GM12878 (cell line): ENCODE measurements at regions of chr22 and their contacts with region 1.

Region 1: GRCh38 chr22:38051900-38052862 is 5.0 kb upstream of the PICK1 start:
- DNase-seq: peak; percentile 30
- ATAC-seq: peak; percentile 93
- H3K4me3 ChIP-seq: no peak overlapping the region
- H3K27ac ChIP-seq: no peak overlapping the region
- H3K4me1 ChIP-seq: no peaks in the 10 kb centered on the region; the same call in 1 of the 2 replicates
- H3K27me3 ChIP-seq: no peaks in the 10 kb centered on the region; a peak in 2 of 4 replicates
- CTCF ChIP-seq: peak; percentile 87 to 97 (median 94); a peak in 5 of 6 replicates
- EP300 ChIP-seq: no peak
- POLR2A ChIP-seq: no peak
- RAD21 ChIP-seq: peak; percentile 89

Region 2: GRCh38 chr22:37959231-37959825 is 92.9 kb before region 1 on chr22:
- CTCF ChIA-PET with region 1: no interaction called
- POLR2A ChIA-PET with region 1: no interaction called
- RAD21 ChIA-PET with region 1: no interaction called
- SMC1A ChIA-PET with region 1: no interaction called
- in situ Hi-C with region 1: no loop called
- intact Hi-C with region 1: no loop called
- DNase-seq: no peak
- ATAC-seq: no peak
- H3K4me3 ChIP-seq: no peak overlapping the region
- H3K27ac ChIP-seq: no peak overlapping the region
- H3K4me1 ChIP-seq: no peaks in the 10 kb centered on the region
- H3K27me3 ChIP-seq: no peaks in the 10 kb centered on the region
- CTCF ChIP-seq: no peak
- EP300 ChIP-seq: no peak
- POLR2A ChIP-seq: no peak
- RAD21 ChIP-seq: no peak

Region 3: GRCh38 chr22:38034274-38034882 is 17.8 kb before region 1 on chr22:
- CTCF ChIA-PET with region 1: interaction called, 10 read pairs
- POLR2A ChIA-PET with region 1: no interaction called
- RAD21 ChIA-PET with region 1: interaction called, 9 read pairs
- SMC1A ChIA-PET with region 1: interaction called, 3 read pairs
- in situ Hi-C with region 1: no loop called
- intact Hi-C with region 1: no loop called
- DNase-seq: peak; percentile 15
- ATAC-seq: peak; percentile 83
- H3K4me3 ChIP-seq: no peak overlapping the region
- H3K27ac ChIP-seq: no peak overlapping the region
- H3K4me1 ChIP-seq: peaks cover 7% of the 10 kb centered on the region; the same call in 1 of the 2 replicates
- H3K27me3 ChIP-seq: no peaks in the 10 kb centered on the region; a peak in 1 of 4 replicates
- CTCF ChIP-seq: no peak
- EP300 ChIP-seq: no peak
- POLR2A ChIP-seq: no peak
- RAD21 ChIP-seq: no peak

Region 4: DNA sequence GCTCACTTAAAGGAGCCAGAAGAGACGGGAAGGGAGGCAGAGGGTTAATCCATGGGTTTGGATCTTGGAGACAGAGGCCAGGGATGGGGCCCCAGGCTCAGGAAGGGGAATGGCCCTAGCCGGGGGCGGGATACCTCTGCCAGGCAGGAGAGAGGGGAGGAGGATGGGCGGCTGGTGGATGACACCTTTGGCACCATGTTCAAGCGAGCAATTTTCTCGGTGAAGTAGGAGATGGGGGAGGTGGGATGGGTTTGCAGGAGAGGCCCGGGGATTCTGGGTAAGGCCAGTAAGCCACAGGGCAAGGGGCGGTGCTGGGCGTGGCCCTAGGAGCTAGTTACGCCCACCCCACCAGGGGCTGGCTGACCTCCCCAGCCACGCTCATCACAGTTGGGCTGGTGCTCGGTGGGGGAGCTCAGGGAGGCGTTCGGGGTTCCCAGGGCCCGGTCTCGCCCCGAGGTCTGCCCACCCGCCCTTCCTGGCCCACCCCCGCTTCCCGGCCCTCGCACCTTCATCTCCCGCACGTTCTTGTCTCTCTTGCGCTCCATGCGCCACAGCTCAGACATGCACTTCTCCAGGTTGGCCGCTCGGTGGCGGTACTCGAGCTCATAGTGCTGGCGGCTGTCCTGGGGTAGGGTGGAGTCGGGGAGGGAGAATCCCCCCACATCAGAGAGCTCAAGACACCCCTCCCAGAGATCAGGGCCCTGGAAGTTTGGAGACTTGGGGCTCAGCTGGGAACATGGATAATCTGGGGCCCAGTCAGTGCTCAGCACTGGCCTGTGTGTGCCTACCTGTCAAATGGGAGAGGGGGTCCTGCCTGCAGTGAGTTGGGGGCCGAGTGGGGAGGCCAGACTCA is 45.6 kb after region 1 on chr22:
- CTCF ChIA-PET with region 1: interaction called, 34 read pairs
- POLR2A ChIA-PET with region 1: no interaction called
- RAD21 ChIA-PET with region 1: interaction called, 4 read pairs
- SMC1A ChIA-PET with region 1: interaction called, 5 read pairs
- in situ Hi-C with region 1: no loop called
- intact Hi-C with region 1: loop called (anchors 5 kb)
- DNase-seq: no peak
- ATAC-seq: peak; percentile 32; the same call in 2 of the 3 replicates
- H3K4me3 ChIP-seq: no peak overlapping the region
- H3K27ac ChIP-seq: no peak overlapping the region
- H3K4me1 ChIP-seq: no peaks in the 10 kb centered on the region
- H3K27me3 ChIP-seq: no peaks in the 10 kb centered on the region
- CTCF ChIP-seq: peak; percentile 6 to 38 (median 27); a peak in 3 of 6 replicates
- EP300 ChIP-seq: no peak
- POLR2A ChIP-seq: no peak
- RAD21 ChIP-seq: no peak

Region 5: DNA sequence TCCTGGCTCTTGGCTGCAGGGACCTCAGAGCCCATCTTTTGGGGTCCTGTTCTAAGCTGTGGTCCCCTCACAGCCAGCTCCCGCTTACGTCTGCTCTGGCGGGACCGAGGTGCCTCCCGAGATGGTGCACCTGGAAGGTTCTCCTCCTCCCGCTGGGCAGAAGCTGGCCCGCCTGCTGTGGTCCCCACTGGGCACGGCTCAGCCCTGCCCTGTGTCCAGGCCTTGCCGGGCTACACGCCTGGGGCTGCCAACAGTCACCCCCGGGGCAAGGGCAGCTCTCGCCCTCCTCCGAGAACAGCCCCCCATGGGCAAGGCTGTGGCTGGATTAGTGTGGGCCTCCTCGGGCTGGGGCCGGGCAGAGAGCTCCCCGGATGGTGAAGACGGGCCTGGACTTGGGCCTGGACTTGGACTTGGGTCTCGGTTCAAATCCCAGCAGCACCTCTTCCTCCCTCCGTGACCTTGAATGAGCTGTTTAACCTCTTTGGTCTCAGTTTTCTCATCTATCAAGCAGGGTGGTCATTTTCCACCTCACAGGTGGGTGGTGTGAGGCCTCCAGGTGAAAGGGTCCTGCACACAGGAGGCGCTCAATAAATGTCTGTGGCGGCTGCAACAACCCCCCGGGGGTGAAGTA is 57.3 kb after region 1 on chr22:
- CTCF ChIA-PET with region 1: interaction called, 34 read pairs
- POLR2A ChIA-PET with region 1: no interaction called
- RAD21 ChIA-PET with region 1: interaction called, 7 read pairs
- SMC1A ChIA-PET with region 1: no interaction called
- in situ Hi-C with region 1: no loop called
- intact Hi-C with region 1: loop called (anchors 5 kb)
- DNase-seq: no peak
- ATAC-seq: peak; percentile 9; the same call in 2 of the 3 replicates
- H3K4me3 ChIP-seq: no peak overlapping the region
- H3K27ac ChIP-seq: no peak overlapping the region
- H3K4me1 ChIP-seq: no peaks in the 10 kb centered on the region
- H3K27me3 ChIP-seq: no peaks in the 10 kb centered on the region
- CTCF ChIP-seq: no peak
- EP300 ChIP-seq: no peak
- POLR2A ChIP-seq: no peak
- RAD21 ChIP-seq: no peak

Region 6: GRCh38 chr22:38262051-38262795 is 210.0 kb after region 1 on chr22:
- CTCF ChIA-PET with region 1: interaction called, 29 read pairs
- POLR2A ChIA-PET with region 1: no interaction called
- RAD21 ChIA-PET with region 1: interaction called, 6 read pairs
- SMC1A ChIA-PET with region 1: interaction called, 9 read pairs
- in situ Hi-C with region 1: no loop called
- intact Hi-C with region 1: loop called (anchors 5 kb)
- DNase-seq: no peak
- ATAC-seq: peak; percentile 75
- H3K4me3 ChIP-seq: no peak overlapping the region
- H3K27ac ChIP-seq: 0 out of 2 replicates have a peak overlapping the region, but pooled peaks have one; percentile 22
- H3K4me1 ChIP-seq: peaks cover 36% of the 10 kb centered on the region
- H3K27me3 ChIP-seq: no peaks in the 10 kb centered on the region
- CTCF ChIP-seq: peak; percentile 59 to 77 (median 66)
- EP300 ChIP-seq: no peak
- POLR2A ChIP-seq: no peak
- RAD21 ChIP-seq: peak; percentile 52

Region 7: DNA sequence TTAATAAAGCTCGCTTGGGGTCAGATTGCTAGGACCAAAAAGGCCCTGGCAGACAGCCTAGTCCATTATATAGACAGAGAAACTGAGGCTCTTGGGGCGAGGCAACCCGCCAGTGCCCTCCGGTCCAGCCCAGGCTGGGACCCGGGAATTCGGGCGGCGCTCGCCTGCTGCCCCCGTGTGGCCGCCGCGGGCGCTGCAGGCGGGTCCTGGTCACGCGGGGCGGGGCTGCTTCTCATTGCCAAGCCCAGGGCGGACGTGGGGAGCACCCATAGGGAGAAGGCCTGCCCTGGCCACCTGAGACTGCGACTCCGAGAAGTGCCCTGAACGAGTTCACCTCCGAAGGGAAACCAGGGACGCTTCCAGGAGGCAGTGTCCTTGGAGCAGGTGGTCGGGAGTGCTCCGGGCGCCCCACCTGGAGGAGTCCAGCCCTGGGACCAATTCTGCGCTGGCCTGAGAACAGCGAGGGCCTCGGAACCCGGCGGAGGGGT is 301.0 kb after region 1 on chr22:
- CTCF ChIA-PET with region 1: interaction called, 13 read pairs
- POLR2A ChIA-PET with region 1: no interaction called
- RAD21 ChIA-PET with region 1: interaction called, 8 read pairs
- SMC1A ChIA-PET with region 1: interaction called, 4 read pairs
- in situ Hi-C with region 1: loop called (anchors 5 kb)
- intact Hi-C with region 1: loop called (anchors 1 kb)
- DNase-seq: no peak
- ATAC-seq: peak; percentile 95
- H3K4me3 ChIP-seq: no peak overlapping the region
- H3K27ac ChIP-seq: no peak overlapping the region
- H3K4me1 ChIP-seq: no peaks in the 10 kb centered on the region
- H3K27me3 ChIP-seq: no peaks in the 10 kb centered on the region
- CTCF ChIP-seq: peak; percentile 91 to 94 (median 93)
- EP300 ChIP-seq: no peak
- POLR2A ChIP-seq: peak; percentile 40; the same call in 1 of the 2 replicates
- RAD21 ChIP-seq: peak; percentile 90

Region 8: DNA sequence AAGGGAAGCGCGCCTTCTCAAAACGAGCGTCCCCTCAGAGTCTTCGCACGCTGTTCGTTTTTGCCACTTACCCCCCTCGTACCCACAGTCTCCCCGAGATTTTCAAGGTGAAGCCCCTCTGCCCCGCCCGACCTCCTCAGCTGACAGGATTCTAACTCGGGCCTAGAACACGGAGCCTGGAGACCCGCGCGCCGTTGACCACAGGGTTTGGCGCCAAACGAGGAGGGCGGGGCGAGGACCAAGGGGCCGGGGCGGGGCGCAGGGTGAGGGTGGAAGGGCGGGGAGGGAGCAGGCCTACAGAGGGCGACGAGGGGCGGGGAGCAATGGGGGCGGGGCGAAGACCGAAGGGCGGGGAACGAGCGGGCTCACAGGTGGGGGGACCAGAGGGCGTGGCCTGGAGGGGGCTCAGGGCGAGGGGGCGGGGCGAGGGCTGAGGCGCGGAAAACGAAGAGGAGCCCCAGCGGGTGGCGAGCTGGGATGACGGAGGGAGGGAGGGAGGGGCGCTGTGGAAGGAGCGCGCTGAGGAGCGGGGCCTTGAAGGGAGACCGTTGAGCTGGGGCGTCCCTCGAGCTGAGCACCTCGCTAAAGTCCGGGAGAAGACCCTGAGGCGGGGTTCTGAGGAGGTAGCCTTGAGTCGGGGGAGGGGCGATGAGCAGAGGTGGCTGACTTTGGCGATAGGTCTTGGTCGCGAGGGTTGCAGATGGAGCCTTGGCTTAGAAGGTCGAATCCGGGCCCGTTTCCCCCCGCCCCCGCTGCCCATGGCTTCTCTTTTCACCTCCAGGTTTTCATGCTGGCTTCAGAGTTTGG is 518.0 kb after region 1 on chr22 and contains the start of gene DMC1:
- CTCF ChIA-PET with region 1: interaction called, 75 read pairs
- POLR2A ChIA-PET with region 1: interaction called, 5 read pairs
- RAD21 ChIA-PET with region 1: interaction called, 49 read pairs
- SMC1A ChIA-PET with region 1: interaction called, 22 read pairs
- in situ Hi-C with region 1: loop called (anchors 5 kb)
- intact Hi-C with region 1: loop called (anchors 1 kb)
- DNase-seq: peak; percentile 73
- ATAC-seq: peak; percentile 92
- H3K4me3 ChIP-seq: peak within 1 kb of the TSS; percentile 77
- H3K27ac ChIP-seq: peak within 1 kb of the TSS; percentile 55
- H3K4me1 ChIP-seq: peaks cover 7% of the 10 kb centered on the region; the same call in 1 of the 2 replicates
- H3K27me3 ChIP-seq: no peaks in the 10 kb centered on the region
- CTCF ChIP-seq: no peak
- EP300 ChIP-seq: no peak
- POLR2A ChIP-seq: peak; percentile 77
- RAD21 ChIP-seq: no peak
- polyA plus RNA-seq, gene DMC1: 1.5 to 3.5 TPM